Naive thymus-derived CD4-positive, alpha-beta T cell (primary cell): ENCODE measurements at regions of chr14 and their contacts with region 1.

Region 1: GRCh38 chr14:91060351-91061055 is at the start of gene RPS6KA5:
- DNase-seq: peak; percentile 93 to 100 (median 100)
- ATAC-seq: peak; percentile 89
- H3K4me3 ChIP-seq: peak within 1 kb of the TSS; percentile 59
- H3K4me3 Mint-ChIP-seq: peak within 1 kb of the TSS in 9 of 10 donors; percentile 80 to 90 (median 86)
- H3K27ac ChIP-seq: peak within 1 kb of the TSS; percentile 91
- H3K27ac Mint-ChIP-seq: peak within 1 kb of the TSS; percentile 28 to 83 (median 74)
- H3K4me1 ChIP-seq: peaks cover 36 to 38% of the 10 kb centered on the region in 2 donors
- H3K4me1 Mint-ChIP-seq: peaks cover 39 to 71% (median 64%) of the 10 kb centered on the region in 7 donors
- H3K27me3 ChIP-seq: no peaks in the 10 kb centered on the region
- H3K27me3 Mint-ChIP-seq: no peaks in the 10 kb centered on the region
- total RNA-seq, gene RPS6KA5: 31.9 to 43.5 (median 34.3) TPM

Region 2: GRCh38 chr14:90827916-90828610 is 232.4 kb before region 1 on chr14:
- CTCF ChIA-PET with region 1: no interaction called
- POLR2A ChIA-PET with region 1: no interaction called
- intact Hi-C with region 1: loop called (anchors 1 to 2 kb)
- DNase-seq: peak; percentile 83 to 94 (median 85)
- ATAC-seq: peak; percentile 100
- H3K4me3 ChIP-seq: peak overlapping the region; percentile 61
- H3K4me3 Mint-ChIP-seq: peak overlapping the region; percentile 69 to 91 (median 84)
- H3K27ac ChIP-seq: peak overlapping the region; percentile 69
- H3K27ac Mint-ChIP-seq: peak overlapping the region; percentile 79 to 96 (median 86)
- H3K4me1 ChIP-seq: peaks cover 14% of the 10 kb centered on the region in 2 donors
- H3K4me1 Mint-ChIP-seq: peaks cover 7 to 28% (median 18%) of the 10 kb centered on the region in 7 donors
- H3K27me3 ChIP-seq: no peaks in the 10 kb centered on the region
- H3K27me3 Mint-ChIP-seq: peaks cover 0 to 3% (median 0%) of the 10 kb centered on the region in 5 donors

Region 3: DNA sequence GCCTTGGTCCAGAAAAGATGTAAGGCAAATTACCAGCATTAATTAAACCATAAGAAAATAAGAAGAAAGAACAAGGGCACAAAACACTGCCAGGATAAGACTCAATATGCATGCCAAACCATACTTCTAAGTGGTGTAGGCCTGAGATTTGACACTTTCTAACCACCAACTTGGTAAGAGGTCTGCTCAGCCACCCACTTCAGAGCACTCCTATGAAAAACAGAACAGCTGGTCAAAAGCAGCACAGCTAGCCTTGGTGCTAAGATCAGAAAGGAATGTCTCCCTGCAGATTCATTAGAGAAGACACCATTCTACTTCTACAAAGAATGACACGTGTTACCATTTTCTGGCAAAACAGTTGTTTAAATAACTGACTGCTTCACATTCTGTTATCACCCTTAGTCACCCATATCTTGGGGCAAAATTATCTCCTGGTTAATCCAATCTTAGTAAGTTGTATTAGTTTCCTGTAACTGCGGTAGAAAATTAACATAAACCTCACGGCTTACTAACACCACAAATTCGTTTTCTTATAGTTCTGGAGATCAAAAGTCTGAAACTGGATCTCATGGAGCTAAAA is 13.2 kb before region 1 on chr14:
- CTCF ChIA-PET with region 1: no interaction called
- POLR2A ChIA-PET with region 1: interaction called, 17 read pairs
- intact Hi-C with region 1: no loop called
- DNase-seq: no peak
- ATAC-seq: peak; percentile 63
- H3K4me3 ChIP-seq: no peak overlapping the region
- H3K4me3 Mint-ChIP-seq: peak overlapping the region in 2 of 10 donors; percentile 1 to 18
- H3K27ac ChIP-seq: no peak overlapping the region
- H3K27ac Mint-ChIP-seq: peak overlapping the region in 1 of 9 donors; percentile 20
- H3K4me1 ChIP-seq: peaks cover 4 to 22% of the 10 kb centered on the region in 2 donors
- H3K4me1 Mint-ChIP-seq: peaks cover 26 to 52% (median 49%) of the 10 kb centered on the region in 7 donors
- H3K27me3 ChIP-seq: no peaks in the 10 kb centered on the region
- H3K27me3 Mint-ChIP-seq: no peaks in the 10 kb centered on the region

Region 4: GRCh38 chr14:91100102-91100501 is 39.6 kb after region 1 on chr14:
- CTCF ChIA-PET with region 1: no interaction called
- POLR2A ChIA-PET with region 1: no interaction called
- intact Hi-C with region 1: no loop called
- DNase-seq: no peak
- ATAC-seq: no peak
- H3K4me3 ChIP-seq: no peak overlapping the region
- H3K4me3 Mint-ChIP-seq: no peak overlapping the region
- H3K27ac ChIP-seq: no peak overlapping the region
- H3K27ac Mint-ChIP-seq: no peak overlapping the region
- H3K4me1 ChIP-seq: no peaks in the 10 kb centered on the region
- H3K4me1 Mint-ChIP-seq: peaks cover 0 to 2% (median 0%) of the 10 kb centered on the region in 7 donors
- H3K27me3 ChIP-seq: no peaks in the 10 kb centered on the region
- H3K27me3 Mint-ChIP-seq: peaks cover 0 to 21% (median 0%) of the 10 kb centered on the region in 5 donors

Region 5: GRCh38 chr14:91177073-91178034 is 116.9 kb after region 1 on chr14:
- CTCF ChIA-PET with region 1: interaction called, 8 read pairs
- POLR2A ChIA-PET with region 1: interaction called, 3 read pairs
- intact Hi-C with region 1: loop called in 1 of 2 experiments (anchors 1 kb)
- DNase-seq: peak; percentile 30 to 80 (median 68)
- ATAC-seq: peak; percentile 91
- H3K4me3 ChIP-seq: no peak overlapping the region
- H3K4me3 Mint-ChIP-seq: peak overlapping the region in 1 of 10 donors; percentile 8
- H3K27ac ChIP-seq: peak overlapping the region; percentile 44
- H3K27ac Mint-ChIP-seq: peak overlapping the region in 8 of 9 donors; percentile 12 to 85 (median 68)
- H3K4me1 ChIP-seq: peaks cover 0 to 8% of the 10 kb centered on the region in 2 donors
- H3K4me1 Mint-ChIP-seq: peaks cover 6 to 29% (median 13%) of the 10 kb centered on the region in 7 donors
- H3K27me3 ChIP-seq: no peaks in the 10 kb centered on the region
- H3K27me3 Mint-ChIP-seq: no peaks in the 10 kb centered on the region

Region 6: GRCh38 chr14:91323671-91324605 is 263.4 kb after region 1 on chr14:
- CTCF ChIA-PET with region 1: no interaction called
- POLR2A ChIA-PET with region 1: interaction called, 9 read pairs
- intact Hi-C with region 1: loop called in 1 of 2 experiments (anchors 2 kb)
- DNase-seq: peak; percentile 90 to 95 (median 92)
- ATAC-seq: peak; percentile 94
- H3K4me3 ChIP-seq: peak overlapping the region; percentile 39
- H3K4me3 Mint-ChIP-seq: peak overlapping the region; percentile 77 to 98 (median 84)
- H3K27ac ChIP-seq: peak overlapping the region; percentile 81
- H3K27ac Mint-ChIP-seq: peak overlapping the region; percentile 94 to 100 (median 99)
- H3K4me1 ChIP-seq: peaks cover 48 to 60% of the 10 kb centered on the region in 2 donors
- H3K4me1 Mint-ChIP-seq: peaks cover 52 to 91% (median 82%) of the 10 kb centered on the region in 7 donors
- H3K27me3 ChIP-seq: no peaks in the 10 kb centered on the region
- H3K27me3 Mint-ChIP-seq: no peaks in the 10 kb centered on the region

Region 7: GRCh38 chr14:92793709-92794546 is 1733.4 kb after region 1 on chr14 and contains the start of gene GOLGA5:
- CTCF ChIA-PET with region 1: no interaction called
- POLR2A ChIA-PET with region 1: no interaction called
- intact Hi-C with region 1: loop called in 1 of 2 experiments (anchors 2 kb)
- DNase-seq: peak; percentile 97 to 100 (median 99)
- ATAC-seq: peak; percentile 97
- H3K4me3 ChIP-seq: peak within 1 kb of the TSS; percentile 98
- H3K4me3 Mint-ChIP-seq: peak within 1 kb of the TSS; percentile 78 to 96 (median 92)
- H3K27ac ChIP-seq: peak within 1 kb of the TSS; percentile 91
- H3K27ac Mint-ChIP-seq: peak within 1 kb of the TSS; percentile 78 to 98 (median 95)
- H3K4me1 ChIP-seq: peaks cover 15 to 20% of the 10 kb centered on the region in 2 donors
- H3K4me1 Mint-ChIP-seq: peaks cover 24 to 45% (median 39%) of the 10 kb centered on the region in 7 donors
- H3K27me3 ChIP-seq: no peaks in the 10 kb centered on the region
- H3K27me3 Mint-ChIP-seq: peaks cover 0 to 9% (median 0%) of the 10 kb centered on the region in 5 donors
- total RNA-seq, gene GOLGA5: 9.7 to 25.8 (median 23.5) TPM